ENCODE measurements at regions of chr21 and their contacts with region 1.

Region 1: GRCh38 chr21:38505654-38506515 is 7.6 kb upstream of the ERG start:
- DNase-seq: no peak
- H3K4me3 ChIP-seq: peak overlapping the region; percentile 30
- H3K27ac ChIP-seq: peak overlapping the region; percentile 21
- H3K4me1 ChIP-seq: peaks cover 32% of the 10 kb centered on the region
- H3K27me3 ChIP-seq: no peaks in the 10 kb centered on the region
- CTCF ChIP-seq: peak; percentile 81

Region 2: DNA sequence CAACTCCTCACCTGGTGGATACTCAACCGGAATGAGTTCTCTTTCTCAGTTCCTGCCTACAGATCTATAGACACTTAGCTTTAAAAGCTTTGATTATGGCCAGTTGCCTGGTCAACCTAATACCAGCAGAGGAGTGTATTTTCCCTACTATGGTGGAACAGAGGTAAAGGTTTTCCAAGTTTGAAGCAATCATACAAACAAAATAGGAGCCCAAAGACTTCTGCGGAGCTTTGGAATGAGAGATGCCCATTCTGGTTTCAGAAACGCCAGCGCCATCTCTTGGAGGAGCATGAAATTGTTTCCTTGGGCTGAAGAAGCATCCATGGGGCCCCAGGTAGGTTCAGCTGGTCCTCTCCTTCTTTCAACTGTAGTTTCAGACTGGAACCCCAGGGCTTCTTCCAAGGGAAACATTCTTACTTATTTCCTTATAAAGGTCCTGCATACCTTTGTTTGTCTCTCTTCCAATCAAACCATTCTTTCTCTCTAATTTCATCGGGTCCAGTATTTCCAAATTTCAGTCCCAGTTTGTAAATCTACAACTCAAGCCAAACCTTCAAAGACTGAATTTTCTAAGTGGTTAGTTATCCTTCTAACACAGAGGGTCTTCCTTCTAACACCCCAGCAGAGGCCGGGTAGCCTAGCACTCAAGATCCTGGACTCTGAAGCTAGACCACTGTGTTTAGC is 153.2 kb before region 1 on chr21:
- intact Hi-C with region 1: no loop called
- DNase-seq: peak; percentile 25
- H3K4me3 ChIP-seq: peak overlapping the region; percentile 2
- H3K27ac ChIP-seq: no peak overlapping the region
- H3K4me1 ChIP-seq: peaks cover 11% of the 10 kb centered on the region
- H3K27me3 ChIP-seq: peaks cover 5% of the 10 kb centered on the region
- CTCF ChIP-seq: peak; percentile 81

Region 3: GRCh38 chr21:38712071-38712470 is 206.2 kb after region 1 on chr21:
- intact Hi-C with region 1: loop called (anchors 10 kb)
- DNase-seq: no peak
- H3K4me3 ChIP-seq: no peak overlapping the region
- H3K27ac ChIP-seq: no peak overlapping the region
- H3K4me1 ChIP-seq: no peaks in the 10 kb centered on the region
- H3K27me3 ChIP-seq: no peaks in the 10 kb centered on the region
- CTCF ChIP-seq: peak; percentile 61

Region 4: DNA sequence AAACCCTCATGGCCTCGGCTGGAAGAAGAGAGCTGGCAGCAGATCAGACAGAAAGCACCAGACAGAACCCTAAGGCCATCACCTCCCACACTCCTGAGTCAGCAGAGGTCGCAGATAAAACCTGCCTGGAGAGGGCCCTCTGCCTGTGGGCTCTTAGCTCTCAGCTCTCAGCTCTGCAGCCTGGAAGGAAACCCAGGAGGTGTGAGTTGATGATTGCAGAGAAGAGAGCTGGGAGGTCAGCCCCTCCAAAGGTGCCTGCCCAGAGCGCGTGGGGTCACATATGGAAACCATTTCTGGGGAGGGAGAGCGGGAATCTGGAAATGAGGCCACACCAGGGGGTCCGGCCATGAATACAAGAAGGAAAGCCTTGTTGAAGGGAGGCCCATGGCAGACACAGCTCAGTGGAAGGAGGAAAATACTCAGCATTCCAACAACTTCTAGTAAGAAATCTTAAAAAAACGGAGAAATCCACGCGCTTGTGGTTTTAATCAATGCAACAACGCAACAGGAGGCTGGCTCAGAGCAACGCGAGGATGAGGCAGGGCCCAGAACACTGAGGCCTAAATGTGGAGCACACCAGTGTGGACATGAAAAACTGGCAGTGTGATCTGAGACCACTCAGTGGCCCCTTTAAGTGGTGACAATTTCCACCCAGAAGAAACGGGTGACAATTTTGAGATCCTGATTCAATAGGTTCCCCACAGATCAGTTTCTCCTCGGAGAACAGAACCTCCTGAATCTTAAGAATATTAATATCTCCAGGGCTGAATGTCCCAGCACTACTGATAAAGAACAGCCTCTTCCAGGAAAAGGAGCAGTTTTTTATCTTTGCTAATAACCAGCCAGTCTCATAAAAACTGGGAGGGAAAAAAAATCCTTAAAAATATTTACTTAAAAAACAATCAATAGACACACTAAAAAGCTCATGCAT is 631.6 kb after region 1 on chr21:
- intact Hi-C with region 1: loop called (anchors 10 kb)
- DNase-seq: no peak
- H3K4me3 ChIP-seq: no peak overlapping the region
- H3K27ac ChIP-seq: peak overlapping the region; percentile 48
- H3K4me1 ChIP-seq: peaks cover 8% of the 10 kb centered on the region
- H3K27me3 ChIP-seq: no peaks in the 10 kb centered on the region
- CTCF ChIP-seq: no peak

Measured in left ventricle myocardium inferior (tissue), 1 donor.